ENCODE measurements at regions of chr7 and their contacts with region 1.

Region 1: GRCh38 chr7:106089647-106090046 is 22.5 kb downstream of the SYPL1 start:
- DNase-seq: no peak
- H3K4me3 ChIP-seq: no peak overlapping the region
- H3K27ac ChIP-seq: no peak overlapping the region
- H3K4me1 ChIP-seq: no peaks in the 10 kb centered on the region
- H3K27me3 ChIP-seq: no peaks in the 10 kb centered on the region
- CTCF ChIP-seq: no peak

Region 2: DNA sequence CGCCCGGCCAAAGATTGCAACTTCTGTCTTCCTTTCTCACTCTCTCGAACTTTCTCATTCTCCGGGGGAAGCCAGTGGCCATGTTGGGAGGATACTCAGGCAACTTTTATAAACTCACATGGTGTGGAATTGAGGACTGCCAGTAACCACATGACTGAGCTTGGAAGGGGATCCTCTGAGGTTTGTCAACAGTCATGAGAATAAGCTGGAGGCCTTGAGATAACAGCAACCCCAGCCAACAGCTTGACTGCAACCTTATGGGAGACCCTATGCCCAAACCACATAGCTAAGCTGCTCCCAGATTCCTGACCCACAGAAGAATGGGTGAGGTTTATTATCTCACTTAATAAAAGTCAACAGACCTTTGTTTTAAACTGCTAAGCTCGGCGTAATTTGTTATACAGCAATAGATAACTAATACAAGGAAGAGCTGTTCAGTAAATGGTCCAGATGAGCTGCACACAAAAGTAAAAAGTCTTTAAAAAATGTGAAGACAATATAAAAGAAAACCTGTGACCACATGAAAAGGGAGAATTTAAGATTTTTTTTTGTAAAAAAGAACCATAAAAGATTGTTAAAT is 12.8 kb after region 1 on chr7:
- CTCF ChIA-PET with region 1: interaction called, 12 read pairs
- POLR2A ChIA-PET with region 1: no interaction called
- intact Hi-C with region 1: no loop called
- DNase-seq: no peak
- H3K4me3 ChIP-seq: no peak overlapping the region
- H3K27ac ChIP-seq: no peak overlapping the region
- H3K4me1 ChIP-seq: no peaks in the 10 kb centered on the region
- H3K27me3 ChIP-seq: no peaks in the 10 kb centered on the region
- CTCF ChIP-seq: no peak

Region 3: GRCh38 chr7:106332201-106332600 is 242.6 kb after region 1 on chr7:
- CTCF ChIA-PET with region 1: no interaction called
- POLR2A ChIA-PET with region 1: interaction called, 10 read pairs
- intact Hi-C with region 1: no loop called
- DNase-seq: no peak
- H3K4me3 ChIP-seq: no peak overlapping the region
- H3K27ac ChIP-seq: no peak overlapping the region
- H3K4me1 ChIP-seq: peaks cover 6% of the 10 kb centered on the region; the same call in 1 of the 2 replicates
- H3K27me3 ChIP-seq: no peaks in the 10 kb centered on the region
- CTCF ChIP-seq: no peak

Region 4: GRCh38 chr7:106486331-106486730 is 396.7 kb after region 1 on chr7:
- CTCF ChIA-PET with region 1: no interaction called
- POLR2A ChIA-PET with region 1: no interaction called
- intact Hi-C with region 1: no loop called
- DNase-seq: peak in 1 of 2 experiments; percentile 90
- H3K4me3 ChIP-seq: no peak overlapping the region
- H3K27ac ChIP-seq: peak overlapping the region; percentile 77
- H3K4me1 ChIP-seq: peaks cover 38% of the 10 kb centered on the region
- H3K27me3 ChIP-seq: no peaks in the 10 kb centered on the region
- CTCF ChIP-seq: no peak